CD4-positive, alpha-beta T cell (primary cell): ENCODE measurements at regions of chr5 and their contacts with region 1.

Region 1: DNA sequence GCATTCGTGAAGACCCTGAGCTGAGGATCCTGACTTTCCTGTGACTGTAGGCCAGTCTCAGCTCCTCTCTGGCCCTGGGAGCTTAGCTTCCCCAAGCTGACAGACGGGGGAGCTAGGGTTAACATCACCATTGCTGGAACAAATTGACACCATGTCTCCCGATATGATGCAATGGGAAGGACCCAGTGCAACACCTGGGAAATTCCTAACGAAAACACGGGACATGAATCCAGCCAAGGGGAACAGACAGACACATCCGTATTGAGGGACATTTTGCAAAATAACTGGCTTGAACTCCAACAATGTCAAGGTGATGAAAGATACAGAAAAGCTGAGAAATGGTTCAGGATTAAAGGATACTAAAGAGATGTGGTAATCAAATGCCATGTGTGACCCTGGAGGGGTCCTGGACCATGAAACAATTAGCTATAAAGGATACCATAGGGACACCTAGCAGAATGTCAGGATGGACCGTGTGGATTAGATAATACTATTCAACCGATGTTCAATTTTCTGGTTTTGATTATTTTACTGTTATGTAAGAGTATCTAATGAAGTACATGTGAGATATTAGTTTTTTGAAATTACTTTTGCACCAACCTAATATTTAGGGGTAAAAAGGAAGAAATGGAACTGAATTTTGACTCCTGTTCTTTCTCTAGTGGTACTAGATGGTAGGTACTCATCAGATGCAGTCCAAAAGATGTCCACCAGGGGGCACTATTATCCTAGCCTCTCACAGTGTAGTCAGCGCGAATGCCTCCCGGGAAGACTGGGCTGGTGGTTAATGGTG is 52.7 kb downstream of the NDST1 start:
- DNase-seq: peak; percentile 58 to 93 (median 82)
- ATAC-seq: peak; percentile 98
- H3K4me3 ChIP-seq: no peak overlapping the region
- H3K4me3 Mint-ChIP-seq: no peak overlapping the region
- H3K27ac ChIP-seq: no peak overlapping the region
- H3K27ac Mint-ChIP-seq: no peak overlapping the region
- H3K4me1 ChIP-seq: no peaks in the 10 kb centered on the region
- H3K4me1 Mint-ChIP-seq: no peaks in the 10 kb centered on the region
- H3K27me3 ChIP-seq: no peaks in the 10 kb centered on the region
- H3K27me3 Mint-ChIP-seq: no peaks in the 10 kb centered on the region
- CTCF ChIP-seq: peak; percentile 88

Region 2: DNA sequence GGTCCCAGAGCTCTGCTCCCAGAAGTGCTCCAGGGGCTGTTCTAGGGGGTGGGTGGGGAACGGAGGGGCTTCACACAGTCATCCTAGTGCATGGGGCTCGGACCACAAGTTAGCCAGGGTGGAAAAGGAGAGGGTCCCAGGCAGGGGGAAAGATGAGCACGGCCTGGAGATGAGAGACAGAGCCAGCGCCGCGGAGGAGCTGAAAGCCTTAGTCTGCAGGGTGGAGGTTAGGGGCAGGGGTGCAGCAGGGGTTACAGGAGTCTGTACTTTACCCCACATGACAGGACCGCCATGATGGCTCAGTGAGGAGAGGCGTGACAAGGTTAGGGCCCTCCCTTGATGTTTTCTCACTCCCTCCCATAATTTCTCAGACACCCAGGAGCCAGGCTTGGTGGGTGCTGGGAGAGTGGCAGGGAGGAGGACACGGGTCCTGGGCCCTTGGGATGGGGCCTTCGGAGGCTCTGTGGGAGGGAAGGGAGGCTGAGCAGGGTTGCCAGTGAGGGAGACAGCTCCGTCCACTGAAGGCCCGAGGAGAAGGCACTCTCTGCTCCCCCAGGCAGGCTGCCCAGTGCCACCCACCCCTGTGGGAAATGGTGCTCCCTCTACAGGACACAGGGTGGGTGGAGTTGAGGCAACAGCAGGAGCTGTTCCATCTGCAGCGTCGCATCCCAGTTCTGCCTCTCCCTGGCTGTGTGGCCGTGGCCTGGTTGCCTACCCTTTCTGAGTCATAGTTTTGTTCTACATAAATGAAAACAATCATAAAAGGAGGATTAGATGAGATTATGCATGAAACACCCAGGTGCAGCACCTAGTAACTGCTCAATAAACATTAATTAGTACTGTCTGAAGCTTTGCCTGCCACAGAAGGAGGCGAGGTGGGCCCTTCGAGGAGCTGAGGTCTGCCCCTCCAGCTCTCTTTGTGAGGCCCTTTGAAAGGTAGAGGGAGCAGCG is 13.5 kb after region 1 on chr5:
- CTCF ChIA-PET with region 1: no interaction called
- POLR2A ChIA-PET with region 1: no interaction called
- intact Hi-C with region 1: no loop called
- DNase-seq: peak in 1 of 14 experiments; percentile 16
- ATAC-seq: no peak
- H3K4me3 ChIP-seq: no peak overlapping the region
- H3K4me3 Mint-ChIP-seq: no peak overlapping the region
- H3K27ac ChIP-seq: no peak overlapping the region
- H3K27ac Mint-ChIP-seq: no peak overlapping the region
- H3K4me1 ChIP-seq: no peaks in the 10 kb centered on the region
- H3K4me1 Mint-ChIP-seq: no peaks in the 10 kb centered on the region
- H3K27me3 ChIP-seq: no peaks in the 10 kb centered on the region
- H3K27me3 Mint-ChIP-seq: no peaks in the 10 kb centered on the region
- CTCF ChIP-seq: no peak

Region 3: GRCh38 chr5:150656191-150657132 is 95.9 kb after region 1 on chr5:
- CTCF ChIA-PET with region 1: interaction called, 4 read pairs
- POLR2A ChIA-PET with region 1: no interaction called
- intact Hi-C with region 1: loop called (anchors 1 kb)
- DNase-seq: peak; percentile 67 to 92 (median 80)
- ATAC-seq: peak; percentile 94
- H3K4me3 ChIP-seq: peak overlapping the region; percentile 68
- H3K4me3 Mint-ChIP-seq: peak overlapping the region; percentile 85
- H3K27ac ChIP-seq: no peak overlapping the region
- H3K27ac Mint-ChIP-seq: no peak overlapping the region
- H3K4me1 ChIP-seq: peaks cover 15% of the 10 kb centered on the region
- H3K4me1 Mint-ChIP-seq: peaks cover 10% of the 10 kb centered on the region
- H3K27me3 ChIP-seq: no peaks in the 10 kb centered on the region
- H3K27me3 Mint-ChIP-seq: no peaks in the 10 kb centered on the region
- CTCF ChIP-seq: peak; percentile 47

Region 4: GRCh38 chr5:150689120-150689519 is 128.5 kb after region 1 on chr5:
- CTCF ChIA-PET with region 1: no interaction called
- POLR2A ChIA-PET with region 1: no interaction called
- intact Hi-C with region 1: no loop called
- DNase-seq: no peak
- ATAC-seq: no peak
- H3K4me3 ChIP-seq: no peak overlapping the region
- H3K4me3 Mint-ChIP-seq: no peak overlapping the region
- H3K27ac ChIP-seq: no peak overlapping the region
- H3K27ac Mint-ChIP-seq: no peak overlapping the region
- H3K4me1 ChIP-seq: no peaks in the 10 kb centered on the region
- H3K4me1 Mint-ChIP-seq: no peaks in the 10 kb centered on the region
- H3K27me3 ChIP-seq: no peaks in the 10 kb centered on the region
- H3K27me3 Mint-ChIP-seq: no peaks in the 10 kb centered on the region
- CTCF ChIP-seq: no peak

Region 5: GRCh38 chr5:150710165-150710564 is 149.6 kb after region 1 on chr5:
- CTCF ChIA-PET with region 1: no interaction called
- POLR2A ChIA-PET with region 1: no interaction called
- intact Hi-C with region 1: loop called in 1 of 2 experiments (anchors 2 kb)
- DNase-seq: peak in 3 of 14 experiments; percentile 19 to 32 (median 31)
- ATAC-seq: no peak
- H3K4me3 ChIP-seq: no peak overlapping the region
- H3K4me3 Mint-ChIP-seq: no peak overlapping the region
- H3K27ac ChIP-seq: no peak overlapping the region
- H3K27ac Mint-ChIP-seq: no peak overlapping the region
- H3K4me1 ChIP-seq: no peaks in the 10 kb centered on the region
- H3K4me1 Mint-ChIP-seq: no peaks in the 10 kb centered on the region
- H3K27me3 ChIP-seq: no peaks in the 10 kb centered on the region
- H3K27me3 Mint-ChIP-seq: no peaks in the 10 kb centered on the region
- CTCF ChIP-seq: peak; percentile 27

Region 6: GRCh38 chr5:150778517-150779396 is 218.2 kb after region 1 on chr5 and contains the start of gene SMIM3:
- CTCF ChIA-PET with region 1: no interaction called
- POLR2A ChIA-PET with region 1: no interaction called
- intact Hi-C with region 1: loop called in 1 of 2 experiments (anchors 2 kb)
- DNase-seq: peak; percentile 53 to 84 (median 68)
- ATAC-seq: peak; percentile 63
- H3K4me3 ChIP-seq: peak within 1 kb of the TSS; percentile 96
- H3K4me3 Mint-ChIP-seq: peak within 1 kb of the TSS; percentile 99
- H3K27ac ChIP-seq: peak within 1 kb of the TSS; percentile 62 to 70
- H3K27ac Mint-ChIP-seq: peak within 1 kb of the TSS; percentile 90
- H3K4me1 ChIP-seq: peaks cover 56% of the 10 kb centered on the region
- H3K4me1 Mint-ChIP-seq: peaks cover 58% of the 10 kb centered on the region
- H3K27me3 ChIP-seq: no peaks in the 10 kb centered on the region
- H3K27me3 Mint-ChIP-seq: no peaks in the 10 kb centered on the region
- CTCF ChIP-seq: peak; percentile 41
- total RNA-seq, gene SMIM3: 2.9 TPM

Region 7: GRCh38 chr5:151051066-151051930 is 490.7 kb after region 1 on chr5:
- CTCF ChIA-PET with region 1: no interaction called
- POLR2A ChIA-PET with region 1: no interaction called
- intact Hi-C with region 1: loop called in 1 of 2 experiments (anchors 5 kb)
- DNase-seq: peak; percentile 58 to 85 (median 65)
- ATAC-seq: peak; percentile 77
- H3K4me3 ChIP-seq: no peak overlapping the region
- H3K4me3 Mint-ChIP-seq: no peak overlapping the region
- H3K27ac ChIP-seq: no peak overlapping the region
- H3K27ac Mint-ChIP-seq: peak overlapping the region; percentile 41
- H3K4me1 ChIP-seq: peaks cover 7% of the 10 kb centered on the region
- H3K4me1 Mint-ChIP-seq: peaks cover 12% of the 10 kb centered on the region
- H3K27me3 ChIP-seq: no peaks in the 10 kb centered on the region
- H3K27me3 Mint-ChIP-seq: no peaks in the 10 kb centered on the region
- CTCF ChIP-seq: peak; percentile 74

Region 8: GRCh38 chr5:151447174-151448037 is 886.8 kb after region 1 on chr5 and contains the start of gene SLC36A1:
- CTCF ChIA-PET with region 1: no interaction called
- POLR2A ChIA-PET with region 1: no interaction called
- intact Hi-C with region 1: no loop called
- DNase-seq: peak; percentile 82 to 95 (median 88)
- ATAC-seq: peak; percentile 97
- H3K4me3 ChIP-seq: peak within 1 kb of the TSS; percentile 93
- H3K4me3 Mint-ChIP-seq: peak within 1 kb of the TSS; percentile 98
- H3K27ac ChIP-seq: peak within 1 kb of the TSS in 1 of 2 donors; percentile 47
- H3K27ac Mint-ChIP-seq: peak within 1 kb of the TSS; percentile 68
- H3K4me1 ChIP-seq: peaks cover 18% of the 10 kb centered on the region
- H3K4me1 Mint-ChIP-seq: peaks cover 23% of the 10 kb centered on the region
- H3K27me3 ChIP-seq: peaks cover 0 to 9% of the 10 kb centered on the region in 2 experiments
- H3K27me3 Mint-ChIP-seq: peaks cover 33% of the 10 kb centered on the region
- CTCF ChIP-seq: peak; percentile 90
- total RNA-seq, gene SLC36A1: 2.2 to 2.8 TPM